Activated T-helper 1 cell treated with anti-CD3 and anti-CD28 coated beads, Interleukin-12 subunit alpha, Interleukin-12 subunit beta, Interleukin-2, Interleukin-4 antibody, amounts not matched to agents 30 ng/mL and 10 ng/mL and 1 ng/mL, durations not matched to agents 14 hours and 24 hours and 36 hours (primary cell): ENCODE measurements at regions of chr3 and their contacts with region 1.

Region 1: DNA sequence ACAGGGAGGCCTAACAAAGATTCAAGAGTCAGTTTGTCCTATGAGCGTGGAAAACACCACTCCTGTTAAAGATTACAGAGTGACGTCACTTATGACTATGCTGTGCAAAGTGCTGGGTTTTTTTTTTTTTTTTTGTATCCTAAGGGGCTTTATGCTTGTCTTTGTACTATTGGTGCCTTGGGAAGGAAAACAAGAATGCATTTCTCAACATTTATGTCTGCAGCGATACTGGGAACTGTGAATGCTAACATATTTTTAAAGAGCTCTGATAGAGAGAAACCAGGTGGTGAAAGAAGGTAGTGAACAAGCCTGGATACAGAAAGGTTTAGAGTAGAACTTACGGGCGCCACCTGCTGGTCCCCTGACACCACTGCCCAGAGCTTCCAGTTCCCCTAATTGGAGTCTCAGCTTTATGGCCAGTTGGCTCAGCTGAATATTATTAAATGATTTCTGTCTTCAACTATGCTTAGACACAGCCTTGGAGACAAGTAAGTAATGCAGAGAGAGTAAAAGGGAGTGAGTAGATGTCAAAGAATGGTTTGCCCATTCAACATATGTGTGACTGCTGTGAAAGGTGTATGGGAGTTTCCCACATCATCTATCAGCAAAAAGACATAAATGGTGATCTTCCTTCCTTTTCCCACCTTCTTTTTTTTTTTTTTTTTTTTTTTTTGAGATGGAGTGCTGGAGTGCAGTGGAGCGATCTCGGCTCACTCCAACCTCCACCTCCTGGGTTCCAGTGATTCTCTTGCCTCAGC is 807.9 kb upstream of the CFAP20DC start:
- DNase-seq: peak; percentile 51
- H3K4me3 Mint-ChIP-seq: no peak overlapping the region
- H3K27ac Mint-ChIP-seq: peak overlapping the region; percentile 19
- H3K4me1 Mint-ChIP-seq: peaks cover 12% of the 10 kb centered on the region
- H3K27me3 Mint-ChIP-seq: no peaks in the 10 kb centered on the region

Region 2: DNA sequence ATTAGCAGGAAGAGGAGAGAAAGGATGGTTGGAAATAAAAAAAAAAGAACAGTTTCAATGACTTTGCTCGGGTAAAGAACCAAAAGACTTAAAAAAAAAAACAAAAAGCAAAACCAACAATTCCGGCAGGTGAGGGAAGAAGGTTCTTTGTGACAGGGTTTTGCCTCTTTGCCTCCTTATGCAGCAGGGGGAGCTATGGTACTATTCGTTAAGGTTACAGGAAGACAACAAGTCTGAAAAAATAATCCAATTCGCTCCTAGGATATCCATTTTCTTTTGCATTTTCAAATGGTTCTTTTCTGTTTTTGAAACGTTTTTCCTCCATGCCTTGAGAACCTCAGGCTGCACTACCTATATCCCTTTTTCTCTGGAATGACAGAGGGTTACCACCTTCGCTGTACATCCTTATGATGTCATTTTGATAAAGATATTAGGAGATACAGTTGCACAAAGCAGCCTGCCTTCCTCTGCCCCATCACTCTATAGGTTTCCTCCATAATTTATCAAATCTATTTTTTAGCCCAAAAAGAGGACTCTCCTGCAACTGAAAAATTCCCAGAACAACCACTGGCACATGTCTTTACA is 862.9 kb before region 1 on chr3:
- intact Hi-C with region 1: loop called (anchors 1 kb)
- DNase-seq: peak; percentile 9
- H3K4me3 Mint-ChIP-seq: no peak overlapping the region
- H3K27ac Mint-ChIP-seq: no peak overlapping the region
- H3K4me1 Mint-ChIP-seq: peaks cover 5% of the 10 kb centered on the region
- H3K27me3 Mint-ChIP-seq: peaks cover 10% of the 10 kb centered on the region

Region 3: GRCh38 chr3:59313365-59313764 is 544.4 kb before region 1 on chr3:
- intact Hi-C with region 1: loop called (anchors 1 kb)
- DNase-seq: peak; percentile 22
- H3K4me3 Mint-ChIP-seq: no peak overlapping the region
- H3K27ac Mint-ChIP-seq: peak overlapping the region; percentile 49
- H3K4me1 Mint-ChIP-seq: peaks cover 47% of the 10 kb centered on the region
- H3K27me3 Mint-ChIP-seq: peaks cover 2% of the 10 kb centered on the region

Region 4: DNA sequence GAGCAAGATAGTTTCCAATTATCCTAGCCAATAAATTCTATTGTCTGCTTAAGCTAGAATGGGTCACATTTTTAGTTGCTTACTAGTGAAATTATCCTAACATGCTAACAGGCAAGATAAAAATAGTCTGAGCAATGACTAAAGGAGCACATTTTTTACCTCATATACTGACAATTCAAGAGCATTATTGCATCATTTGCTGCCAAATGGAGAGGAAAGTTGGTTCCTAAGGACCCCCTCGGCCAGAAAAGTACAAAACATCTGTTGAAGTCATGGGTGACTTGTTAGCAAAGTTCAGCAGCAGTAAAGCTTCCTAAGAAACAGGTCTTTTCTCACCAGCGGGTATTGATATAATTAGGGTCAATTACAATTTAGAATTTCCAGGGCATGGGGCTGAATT is 392.4 kb after region 1 on chr3:
- intact Hi-C with region 1: no loop called
- DNase-seq: no peak
- H3K4me3 Mint-ChIP-seq: no peak overlapping the region
- H3K27ac Mint-ChIP-seq: no peak overlapping the region
- H3K4me1 Mint-ChIP-seq: no peaks in the 10 kb centered on the region
- H3K27me3 Mint-ChIP-seq: peaks cover 2% of the 10 kb centered on the region